Dendritic cell treated with granulocyte-macrophage colony-stimulating factor and Interleukin-4, amounts not matched to agents 40 ng/mL and 50 ng/mL, for 4 days (primary cell): ENCODE measurements at regions of chr13 and their contacts with region 1.

Region 1: DNA sequence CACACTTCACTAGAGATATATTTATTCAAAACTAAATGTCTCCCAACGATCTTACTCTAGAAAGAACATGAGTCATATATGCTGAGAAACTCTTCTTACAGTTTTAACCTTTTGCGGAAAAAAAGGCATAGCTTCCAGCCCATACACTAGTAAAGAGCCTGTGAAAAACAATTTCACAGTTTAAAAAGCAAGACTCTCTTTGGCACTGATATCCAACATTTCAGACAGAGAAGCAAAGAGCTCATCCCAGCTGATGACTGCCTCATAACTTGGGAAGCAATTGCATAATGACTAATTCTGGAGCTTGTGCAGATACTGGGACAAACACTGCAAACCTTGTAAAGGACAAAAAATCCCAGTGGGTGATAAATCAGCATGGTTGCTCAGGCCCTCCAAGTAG is 88.0 kb downstream of the ENOX1 start:
- H3K4me3 Mint-ChIP-seq: no peak overlapping the region
- H3K27ac Mint-ChIP-seq: no peak overlapping the region
- H3K4me1 Mint-ChIP-seq: no peaks in the 10 kb centered on the region
- H3K27me3 Mint-ChIP-seq: no peaks in the 10 kb centered on the region

Region 2: DNA sequence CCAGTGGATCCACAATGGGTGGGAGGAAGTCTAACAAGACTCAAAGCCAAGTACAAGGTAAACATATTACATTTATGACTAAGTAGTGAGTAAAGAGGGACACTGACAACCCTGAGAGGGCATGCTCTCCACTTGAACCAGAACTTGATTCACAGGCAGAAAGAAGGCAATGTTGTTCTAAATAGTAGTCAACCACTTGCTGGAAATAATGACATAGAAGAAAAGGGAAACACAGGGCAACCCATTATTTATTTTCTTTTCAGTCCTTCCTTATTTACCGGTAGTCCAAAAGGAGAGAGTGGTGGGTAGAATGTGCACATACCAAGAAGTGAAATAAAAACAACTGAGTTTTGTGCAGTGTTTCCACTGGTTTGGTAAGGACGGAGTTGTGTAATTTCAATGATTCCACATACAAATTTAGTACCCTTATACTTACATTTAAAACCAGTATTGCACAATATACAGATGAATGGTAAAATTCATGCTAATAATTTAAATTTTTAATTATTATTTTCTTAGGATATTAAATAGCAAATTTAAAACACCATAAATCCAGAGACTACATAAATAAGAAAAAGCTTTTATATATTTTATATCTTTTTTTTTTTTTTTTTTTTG is 22.1 kb after region 1 on chr13:
- intact Hi-C with region 1: loop called (anchors 2 kb)
- H3K4me3 Mint-ChIP-seq: no peak overlapping the region
- H3K27ac Mint-ChIP-seq: no peak overlapping the region
- H3K4me1 Mint-ChIP-seq: no peaks in the 10 kb centered on the region
- H3K27me3 Mint-ChIP-seq: no peaks in the 10 kb centered on the region

Region 3: GRCh38 chr13:43935878-43936277 is 237.1 kb after region 1 on chr13:
- intact Hi-C with region 1: no loop called
- H3K4me3 Mint-ChIP-seq: no peak overlapping the region
- H3K27ac Mint-ChIP-seq: no peak overlapping the region
- H3K4me1 Mint-ChIP-seq: peaks cover 11% of the 10 kb centered on the region
- H3K27me3 Mint-ChIP-seq: peaks cover 85% of the 10 kb centered on the region